HEK293T (cell line): ENCODE measurements at regions of chr14 and their contacts with region 1.

Region 1: DNA sequence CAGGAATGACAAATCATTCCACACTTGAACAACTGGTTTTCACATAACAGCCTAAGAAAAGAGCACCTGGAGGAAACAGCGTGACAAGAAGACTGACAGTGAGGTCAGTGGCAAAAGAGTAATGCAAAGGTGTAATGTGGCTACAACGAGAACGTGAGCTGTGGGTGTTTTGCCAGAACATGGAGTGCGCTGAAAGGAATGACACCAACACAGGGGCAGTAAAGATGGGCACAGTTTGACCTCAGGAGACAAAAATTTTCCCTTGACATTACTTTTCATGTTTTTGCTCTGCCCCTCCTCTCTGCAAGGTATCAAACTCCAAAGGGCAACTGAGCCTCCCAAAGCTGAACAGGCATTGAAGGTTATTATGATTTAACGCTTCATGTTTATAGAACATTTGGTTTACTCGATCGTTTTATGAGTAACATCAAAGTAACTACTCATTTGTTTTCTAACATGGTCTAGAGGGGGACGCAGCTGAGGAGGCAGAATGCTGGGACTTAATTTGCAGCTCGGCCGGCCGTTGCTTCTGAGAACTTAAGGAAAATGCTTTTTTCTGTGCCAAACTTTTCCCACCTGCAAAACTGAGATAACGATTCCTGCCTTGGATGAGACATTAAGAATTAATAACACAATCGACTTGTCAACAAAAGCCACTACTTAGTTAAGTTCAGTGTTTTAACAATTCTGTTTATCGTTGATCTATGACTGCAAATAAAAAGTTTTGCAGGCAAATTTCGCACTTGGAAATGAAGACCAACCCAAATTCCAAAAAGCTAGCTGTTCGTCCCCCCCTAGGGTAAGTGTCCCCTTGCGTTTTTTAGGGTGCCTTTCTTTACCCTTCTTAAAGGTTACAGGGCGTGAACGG is 954 bp downstream of the HAUS4 start:
- DNase-seq: no peak

Region 2: DNA sequence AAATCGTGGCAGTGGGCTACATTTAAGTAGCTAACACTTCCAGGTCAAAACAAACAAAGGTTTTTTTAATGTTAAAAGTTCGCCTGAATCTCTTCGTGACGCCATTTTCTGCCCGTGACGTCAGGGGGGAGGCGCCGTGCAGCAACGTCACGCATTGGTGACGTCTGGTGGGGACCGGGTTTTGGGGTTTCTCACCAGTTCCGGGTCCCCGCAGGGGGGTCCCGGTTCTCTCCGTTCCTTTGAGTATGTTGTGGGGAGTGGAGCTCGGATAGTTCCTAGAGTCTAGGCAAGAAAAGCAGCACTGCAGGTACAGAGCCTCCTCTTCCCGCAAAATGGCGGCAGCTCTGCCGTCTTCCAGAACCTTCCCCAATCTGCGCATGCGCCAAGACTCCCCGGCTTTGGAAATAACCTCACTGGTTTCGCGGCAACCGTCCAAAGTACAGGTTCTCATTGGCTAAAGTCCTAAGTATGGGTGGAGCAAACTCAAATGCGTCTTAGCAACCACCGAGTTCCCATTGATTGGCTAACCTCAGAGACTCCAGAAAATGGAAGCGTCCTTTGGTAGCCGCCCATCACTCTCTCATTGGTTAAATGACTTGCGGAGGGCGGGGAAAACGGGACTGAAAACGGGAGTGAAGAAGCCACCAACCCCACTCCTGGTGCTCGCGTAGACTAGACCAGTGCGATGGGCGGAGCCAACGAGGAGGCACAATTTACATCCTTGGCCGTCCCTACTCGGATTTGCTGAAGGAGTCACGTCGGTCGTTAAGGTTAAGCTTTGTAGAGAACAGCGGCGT is 36.9 kb before region 1 on chr14 and contains the start of gene RBM23:
- CTCF ChIA-PET with region 1: no interaction called
- POLR2A ChIA-PET with region 1: interaction called, 22 read pairs
- DNase-seq: peak; percentile 93

Region 3: GRCh38 chr14:22939684-22940083 is 16.3 kb before region 1 on chr14:
- CTCF ChIA-PET with region 1: interaction called, 4 read pairs
- POLR2A ChIA-PET with region 1: interaction called, 43 read pairs
- DNase-seq: no peak

Region 4: GRCh38 chr14:22966783-22967269 is 10.9 kb after region 1 on chr14:
- CTCF ChIA-PET with region 1: interaction called, 6 read pairs
- POLR2A ChIA-PET with region 1: interaction called, 48 read pairs
- DNase-seq: no peak

Region 5: GRCh38 chr14:22986508-22987054 is 30.6 kb after region 1 on chr14:
- CTCF ChIA-PET with region 1: interaction called, 8 read pairs
- POLR2A ChIA-PET with region 1: interaction called, 27 read pairs
- DNase-seq: peak; percentile 79